ENCODE measurements at regions of chr13 and their contacts with region 1.

Region 1: DNA sequence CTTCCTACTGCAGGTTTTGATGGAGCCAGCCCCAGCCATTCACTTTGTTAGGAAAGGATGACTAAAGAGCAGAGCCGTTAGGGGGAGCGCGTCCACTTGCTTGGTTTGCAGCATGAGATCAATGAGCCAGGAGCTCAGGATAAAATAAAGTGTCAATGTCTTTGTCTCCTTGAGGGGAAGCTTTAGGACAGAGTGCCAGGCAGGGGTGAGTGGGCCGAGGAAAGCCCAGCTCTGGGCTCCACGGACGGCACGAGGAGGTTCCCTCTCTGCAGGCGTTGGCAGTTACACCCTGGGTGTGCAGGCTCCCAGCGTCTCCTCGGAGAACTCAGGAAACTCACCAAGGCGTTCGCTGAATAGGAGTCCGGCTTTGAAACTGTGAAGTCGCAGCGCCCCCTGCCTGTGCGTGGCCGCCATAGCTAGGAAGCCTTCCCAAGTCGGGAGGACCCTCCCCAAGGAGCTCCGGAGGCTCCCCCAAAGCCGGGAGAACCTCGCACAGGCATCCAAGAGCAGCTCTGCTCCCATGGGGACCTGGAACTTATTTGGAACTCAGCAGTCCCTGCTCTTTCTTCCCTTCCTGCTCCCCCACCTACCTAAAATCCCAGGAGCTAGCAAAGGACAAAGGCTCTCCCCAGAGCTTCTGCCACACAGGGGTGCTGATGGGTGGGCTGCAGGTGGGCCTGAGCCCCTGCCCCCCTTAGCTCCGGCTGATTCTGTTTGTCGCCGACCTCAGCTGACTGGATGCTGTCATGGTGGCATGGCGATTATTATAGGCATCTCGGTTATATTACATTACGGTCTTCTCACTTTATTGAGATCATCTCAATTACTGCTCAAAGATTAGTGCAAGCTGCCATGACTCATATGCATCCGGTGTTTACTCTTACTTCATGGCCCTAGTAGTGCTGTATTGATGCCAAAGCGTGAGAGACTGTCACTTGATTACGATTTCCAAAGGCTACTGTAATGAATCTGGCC is 34.4 kb downstream of the GSX1 start:
- DNase-seq: peak; percentile 88
- H3K4me3 ChIP-seq: peak overlapping the region in 1 of 3 experiments; percentile 30
- H3K27ac ChIP-seq: no peak overlapping the region
- H3K4me1 ChIP-seq: no peaks in the 10 kb centered on the region
- H3K27me3 ChIP-seq: peaks cover 28 to 44% of the 10 kb centered on the region in 2 experiments
- CTCF ChIP-seq: peak; percentile 85 to 93
- POLR2A ChIP-seq: no peak

Region 2: DNA sequence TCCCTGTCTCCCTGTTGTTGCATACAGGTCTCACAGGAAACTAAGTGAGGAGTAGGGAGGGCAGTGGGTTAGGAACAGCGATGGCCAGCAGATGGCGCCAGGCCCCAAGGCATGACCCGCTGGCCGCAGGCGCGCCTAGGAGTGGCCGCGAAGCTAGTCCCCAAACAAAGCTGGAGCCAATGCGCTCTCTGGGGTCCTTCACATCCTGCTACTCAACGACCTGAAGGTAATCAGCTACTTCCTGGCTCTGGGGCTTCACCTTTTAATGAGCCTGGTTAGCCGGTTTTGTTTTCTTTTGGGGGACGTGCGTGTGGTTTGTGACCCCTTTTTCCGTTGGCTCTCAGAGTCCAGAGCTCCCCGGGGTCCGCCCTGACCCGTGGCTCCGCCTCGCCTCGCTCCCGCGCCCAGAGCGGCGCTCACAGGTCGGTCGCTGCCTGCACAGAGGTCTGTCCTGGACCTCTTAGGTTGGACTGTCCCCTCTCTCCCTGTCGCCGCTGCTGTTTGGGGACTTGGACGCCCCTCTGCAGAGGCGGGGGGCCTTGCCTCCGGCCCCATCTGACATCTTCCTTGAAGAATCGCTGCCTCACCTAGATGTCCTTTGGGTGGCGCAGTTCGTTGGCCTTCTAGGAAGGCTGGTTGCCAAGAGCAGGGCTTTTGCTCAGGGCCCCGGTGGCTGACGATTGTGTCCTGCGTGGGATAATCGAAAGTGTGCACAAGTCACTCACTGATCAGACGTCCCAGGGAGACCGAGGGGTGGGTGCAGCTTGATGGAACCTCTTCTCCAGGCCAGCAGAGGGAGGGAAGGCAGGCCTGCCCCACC is 464.4 kb before region 1 on chr13:
- CTCF ChIA-PET with region 1: interaction called, 149 read pairs
- POLR2A ChIA-PET with region 1: no interaction called
- dilution Hi-C with region 1: no loop called
- intact Hi-C with region 1: loop called (anchors 1 kb)
- DNase-seq: peak; percentile 70
- H3K4me3 ChIP-seq: peak overlapping the region in 2 of 3 experiments; percentile 12 to 29
- H3K27ac ChIP-seq: no peak overlapping the region
- H3K4me1 ChIP-seq: no peaks in the 10 kb centered on the region
- H3K27me3 ChIP-seq: peaks cover 6 to 19% of the 10 kb centered on the region in 2 experiments
- CTCF ChIP-seq: peak; percentile 93 to 99
- POLR2A ChIP-seq: no peak

Region 3: DNA sequence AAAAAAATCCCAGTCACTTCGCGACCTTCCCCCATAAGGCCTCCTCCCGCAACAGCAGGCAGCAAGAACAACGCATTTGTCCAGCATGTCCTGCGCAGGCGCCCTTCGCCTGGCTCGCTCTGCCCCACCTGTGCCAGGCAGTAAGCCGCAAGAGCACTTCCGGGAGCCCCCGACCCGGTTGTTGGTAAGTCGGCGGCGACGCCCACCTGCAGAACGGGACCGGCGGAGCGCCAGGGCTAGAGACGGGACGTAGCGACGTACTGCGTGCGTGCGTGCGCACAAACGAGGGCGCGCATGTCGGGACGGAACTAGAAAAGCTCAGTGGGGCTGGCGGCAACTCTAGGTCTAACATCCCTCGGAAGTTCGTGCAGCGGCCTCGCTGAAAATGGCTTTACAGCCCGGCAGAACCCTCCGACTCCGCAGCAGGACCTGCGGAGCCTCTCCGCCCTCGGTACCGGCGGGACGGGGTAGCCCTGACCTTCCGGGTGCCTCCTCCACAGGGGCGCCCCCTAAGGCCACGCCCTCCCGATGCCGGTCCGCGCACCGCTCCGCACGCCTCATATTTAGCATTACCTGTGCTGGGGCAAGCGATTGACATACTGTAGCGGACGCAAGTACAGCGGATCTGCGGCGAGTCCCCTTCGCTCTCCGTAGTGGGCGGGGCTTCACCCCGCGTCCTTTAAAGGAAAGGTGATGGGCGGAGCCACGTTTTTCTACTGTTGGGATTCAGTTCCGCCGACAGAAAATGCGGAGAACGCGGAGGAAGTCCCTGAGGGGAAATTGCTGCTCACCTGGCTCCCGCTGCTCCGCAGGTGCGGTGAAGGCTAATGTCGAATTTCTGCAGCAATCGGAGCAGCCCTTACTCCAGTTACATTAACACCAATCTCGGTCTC is 376.5 kb before region 1 on chr13 and contains the start of gene MTIF3:
- CTCF ChIA-PET with region 1: interaction called, 20 read pairs
- POLR2A ChIA-PET with region 1: no interaction called
- dilution Hi-C with region 1: no loop called
- intact Hi-C with region 1: no loop called
- DNase-seq: peak; percentile 92
- H3K4me3 ChIP-seq: peak within 1 kb of the TSS; percentile 68 to 90 (median 82)
- H3K27ac ChIP-seq: peak within 1 kb of the TSS; percentile 55
- H3K4me1 ChIP-seq: peaks cover 21% of the 10 kb centered on the region
- H3K27me3 ChIP-seq: peaks cover 7 to 20% of the 10 kb centered on the region in 2 experiments
- CTCF ChIP-seq: no peak
- POLR2A ChIP-seq: peak; percentile 77
- total RNA-seq, gene MTIF3: 23.5 and 36.1 TPM in 2 replicates

Region 4: GRCh38 chr13:27533155-27533643 is 293.5 kb before region 1 on chr13:
- CTCF ChIA-PET with region 1: interaction called, 484 read pairs
- POLR2A ChIA-PET with region 1: no interaction called
- dilution Hi-C with region 1: loop called (anchors 25 kb)
- intact Hi-C with region 1: loop called (anchors 1 kb)
- DNase-seq: peak; percentile 69
- H3K4me3 ChIP-seq: no peak overlapping the region
- H3K27ac ChIP-seq: no peak overlapping the region
- H3K4me1 ChIP-seq: no peaks in the 10 kb centered on the region
- H3K27me3 ChIP-seq: no peaks in the 10 kb centered on the region
- CTCF ChIP-seq: peak; percentile 95 to 99
- POLR2A ChIP-seq: no peak

Region 5: DNA sequence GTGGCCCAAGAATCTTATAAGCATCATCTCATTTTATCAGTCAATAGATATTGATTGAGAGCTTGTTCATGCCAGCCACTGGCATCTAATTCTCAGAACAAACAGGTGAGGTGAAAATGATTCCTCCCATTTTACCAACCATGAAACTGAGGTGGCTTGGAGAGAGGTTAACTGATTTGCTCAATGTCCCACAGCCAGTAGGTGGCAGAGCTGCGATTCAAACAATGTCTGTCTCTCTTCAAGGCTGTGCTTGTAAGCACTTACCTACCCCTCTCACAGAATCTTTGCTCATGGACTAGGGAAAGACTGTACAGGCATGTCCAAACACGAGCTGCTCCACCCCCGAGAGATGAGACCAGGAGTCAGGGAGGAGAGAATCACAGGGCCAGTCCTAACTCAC is 55.9 kb before region 1 on chr13:
- CTCF ChIA-PET with region 1: interaction called, 12 read pairs
- POLR2A ChIA-PET with region 1: no interaction called
- dilution Hi-C with region 1: no loop called
- intact Hi-C with region 1: loop called (anchors 2 kb)
- DNase-seq: peak; percentile 17
- H3K4me3 ChIP-seq: no peak overlapping the region
- H3K27ac ChIP-seq: no peak overlapping the region
- H3K4me1 ChIP-seq: no peaks in the 10 kb centered on the region
- H3K27me3 ChIP-seq: peaks cover 0 to 11% of the 10 kb centered on the region in 2 experiments
- CTCF ChIP-seq: peak; percentile 14 to 51
- POLR2A ChIP-seq: no peak

Region 6: GRCh38 chr13:27953676-27954405 is 127.2 kb after region 1 on chr13:
- CTCF ChIA-PET with region 1: interaction called, 135 read pairs
- POLR2A ChIA-PET with region 1: no interaction called
- dilution Hi-C with region 1: no loop called
- intact Hi-C with region 1: loop called (anchors 1 kb)
- DNase-seq: peak; percentile 64
- H3K4me3 ChIP-seq: peak overlapping the region; percentile 27 to 52 (median 32)
- H3K27ac ChIP-seq: no peak overlapping the region
- H3K4me1 ChIP-seq: peaks cover 15% of the 10 kb centered on the region
- H3K27me3 ChIP-seq: peaks cover 36 to 67% of the 10 kb centered on the region in 2 experiments
- CTCF ChIP-seq: peak; percentile 89 to 95
- POLR2A ChIP-seq: no peak

Region 7: DNA sequence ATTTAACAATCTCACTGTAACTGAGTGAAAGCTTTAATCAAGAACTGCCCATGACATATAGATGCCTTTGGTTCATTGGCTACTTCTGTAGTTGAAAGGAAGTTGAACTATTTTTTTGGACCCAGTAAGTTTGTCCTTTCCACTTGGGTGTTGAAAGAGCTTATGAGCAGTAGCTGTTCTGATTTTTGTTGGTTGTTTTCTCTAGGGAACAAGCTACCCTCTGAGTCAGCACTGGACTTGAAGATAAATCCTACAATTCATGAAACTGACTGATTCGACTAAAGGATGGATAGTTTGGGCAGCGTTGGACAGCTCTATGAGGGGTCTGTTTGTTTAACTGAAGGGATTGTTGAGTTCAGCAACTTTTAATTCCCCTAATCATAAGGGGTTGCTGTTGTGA is 412.7 kb after region 1 on chr13:
- CTCF ChIA-PET with region 1: no interaction called
- POLR2A ChIA-PET with region 1: no interaction called
- dilution Hi-C with region 1: no loop called
- intact Hi-C with region 1: no loop called
- DNase-seq: no peak
- H3K4me3 ChIP-seq: no peak overlapping the region
- H3K27ac ChIP-seq: no peak overlapping the region
- H3K4me1 ChIP-seq: no peaks in the 10 kb centered on the region
- H3K27me3 ChIP-seq: no peaks in the 10 kb centered on the region
- CTCF ChIP-seq: no peak
- POLR2A ChIP-seq: no peak

Measured in endothelial cell of umbilical vein (primary cell).